Heart left ventricle (tissue), 16 donors: ENCODE measurements at regions of chr9 and their contacts with region 1.

Region 1: DNA sequence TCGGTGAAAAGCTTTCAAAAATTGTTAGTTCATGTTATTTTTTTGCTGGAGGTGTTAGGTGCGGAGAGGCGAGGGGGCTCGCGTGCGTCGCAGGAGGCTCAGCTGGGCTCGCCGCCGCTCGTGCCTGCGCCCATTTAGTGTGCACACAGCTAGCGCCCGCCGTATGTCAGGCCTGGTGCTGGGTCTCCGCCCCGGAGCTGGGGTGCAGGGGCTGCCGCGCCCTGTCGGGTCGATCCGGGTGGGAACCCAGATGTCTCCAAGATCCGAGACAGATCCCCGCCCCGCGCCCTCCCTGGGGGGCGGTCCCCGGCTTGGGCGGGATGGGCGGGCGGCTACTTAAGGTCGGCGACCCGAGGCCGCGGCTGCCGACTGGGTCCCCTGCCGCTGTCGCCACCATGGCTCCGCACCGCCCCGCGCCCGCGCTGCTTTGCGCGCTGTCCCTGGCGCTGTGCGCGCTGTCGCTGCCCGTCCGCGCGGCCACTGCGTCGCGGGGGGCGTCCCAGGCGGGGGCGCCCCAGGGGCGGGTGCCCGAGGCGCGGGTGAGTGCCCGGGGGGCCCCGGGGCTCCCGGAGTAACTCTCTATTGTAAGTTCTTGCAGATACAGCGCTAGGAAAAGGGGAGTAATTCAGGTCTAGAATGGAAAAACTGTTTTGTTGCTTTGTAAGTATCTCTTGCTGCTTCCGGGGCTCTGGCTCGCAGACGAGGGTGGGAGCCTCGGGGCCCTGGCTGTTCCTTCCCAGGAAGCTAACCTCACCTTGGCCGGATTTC is 31.7 kb downstream of the GSN start:
- DNase-seq: peak; percentile 88 to 93 (median 92)
- ATAC-seq: peak; percentile 35 to 78 (median 72)
- H3K4me3 ChIP-seq: peak overlapping the region; percentile 45 to 93 (median 68)
- H3K27ac ChIP-seq: peak overlapping the region; percentile 86 to 98 (median 94)
- H3K4me1 ChIP-seq: peaks cover 17 to 94% (median 84%) of the 10 kb centered on the region in 12 donors
- H3K27me3 ChIP-seq: no peaks in the 10 kb centered on the region
- CTCF ChIP-seq: peak in 3 of 12 donors; percentile 5 to 18 (median 15)
- POLR2A ChIP-seq: peak in 1 of 2 donors; percentile 93

Region 2: DNA sequence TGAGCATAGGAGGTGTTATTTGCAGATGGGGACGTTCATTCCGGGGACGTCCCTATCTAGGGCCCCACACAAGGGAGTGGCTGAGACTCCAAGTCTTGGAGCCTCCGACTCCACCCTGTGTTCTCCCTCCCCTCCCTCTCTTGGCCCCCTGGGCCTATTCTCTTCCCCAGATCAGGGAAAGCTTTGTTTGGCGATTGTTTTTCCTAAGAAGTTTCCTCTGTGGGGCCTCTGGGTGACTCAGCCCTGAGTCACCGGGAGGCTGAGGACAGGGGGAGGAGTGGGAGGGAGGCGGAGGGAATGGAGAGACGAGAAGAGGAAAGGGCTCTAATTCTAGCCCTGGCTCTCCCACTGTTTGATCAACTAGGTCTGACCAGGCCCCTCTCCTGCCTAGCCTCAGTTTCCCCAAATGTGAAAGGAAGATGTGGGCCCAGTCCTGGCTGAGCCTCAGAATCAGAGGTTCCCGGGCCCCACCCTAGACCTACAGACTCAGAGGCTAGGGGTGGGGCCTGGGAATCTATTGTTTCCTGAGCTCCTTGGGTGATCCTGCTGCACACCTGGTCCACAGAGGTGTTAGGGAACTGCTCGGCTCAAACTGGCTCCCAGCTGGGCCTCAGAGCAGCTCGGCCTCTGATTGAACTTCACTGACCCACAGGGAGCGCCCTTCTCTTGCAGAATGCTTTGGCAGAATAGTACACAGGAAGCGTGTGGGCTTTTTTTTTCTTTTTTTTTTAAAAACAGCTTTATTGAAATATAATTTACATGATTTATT is 12.5 kb before region 1 on chr9:
- intact Hi-C with region 1: loop called in 2 of 10 experiments (anchors 1 to 2 kb)
- DNase-seq: peak; percentile 86 to 93 (median 89)
- ATAC-seq: peak; percentile 62 to 80 (median 76)
- H3K4me3 ChIP-seq: peak overlapping the region in 10 of 12 donors; percentile 10 to 51 (median 38)
- H3K27ac ChIP-seq: peak overlapping the region; percentile 96 to 100 (median 98)
- H3K4me1 ChIP-seq: peaks cover 42 to 96% (median 81%) of the 10 kb centered on the region in 12 donors
- H3K27me3 ChIP-seq: no peaks in the 10 kb centered on the region
- CTCF ChIP-seq: peak in 11 of 12 donors; percentile 17 to 67 (median 44)
- POLR2A ChIP-seq: no peak